Mammary epithelial cell (primary cell): ENCODE measurements at regions of chr16 and their contacts with region 1.

Region 1: GRCh38 chr16:31700526-31701388 is 172.8 kb upstream of the ZNF267 start:
- DNase-seq: peak; percentile 86
- H3K4me3 ChIP-seq: peak overlapping the region; percentile 83 to 95 (median 93)
- H3K27ac ChIP-seq: peak overlapping the region; percentile 88
- H3K4me1 ChIP-seq: peaks cover 8% of the 10 kb centered on the region
- H3K27me3 ChIP-seq: no peaks in the 10 kb centered on the region
- CTCF ChIP-seq: no peak

Region 2: GRCh38 chr16:31202414-31203375 is 498.1 kb before region 1 on chr16 and contains the start of gene PYCARD:
- CTCF ChIA-PET with region 1: no interaction called
- dilution Hi-C with region 1: loop called (anchors 10 kb)
- in situ Hi-C with region 1: loop called in 1 of 2 experiments (anchors 25 kb)
- intact Hi-C with region 1: no loop called
- DNase-seq: peak; percentile 49
- H3K4me3 ChIP-seq: peak within 1 kb of the TSS; percentile 49 to 90 (median 56)
- H3K27ac ChIP-seq: peak within 1 kb of the TSS; percentile 45
- H3K4me1 ChIP-seq: peaks cover 16% of the 10 kb centered on the region
- H3K27me3 ChIP-seq: no peaks in the 10 kb centered on the region
- CTCF ChIP-seq: no peak
- total RNA-seq, gene PYCARD: 30.3 to 38.8 TPM

Region 3: GRCh38 chr16:31440516-31441184 is 260.1 kb before region 1 on chr16:
- CTCF ChIA-PET with region 1: no interaction called
- dilution Hi-C with region 1: no loop called
- in situ Hi-C with region 1: no loop called
- intact Hi-C with region 1: loop called (anchors 2 kb)
- DNase-seq: no peak
- H3K4me3 ChIP-seq: no peak overlapping the region
- H3K27ac ChIP-seq: no peak overlapping the region
- H3K4me1 ChIP-seq: peaks cover 4% of the 10 kb centered on the region
- H3K27me3 ChIP-seq: no peaks in the 10 kb centered on the region
- CTCF ChIP-seq: no peak

Region 4: GRCh38 chr16:31472709-31473203 is 228.0 kb before region 1 on chr16:
- CTCF ChIA-PET with region 1: no interaction called
- dilution Hi-C with region 1: no loop called
- in situ Hi-C with region 1: loop called in 1 of 2 experiments (anchors 10 kb)
- intact Hi-C with region 1: loop called (anchors 1 kb)
- DNase-seq: peak; percentile 90
- H3K4me3 ChIP-seq: peak overlapping the region; percentile 60 to 72 (median 69)
- H3K27ac ChIP-seq: peak overlapping the region; percentile 40
- H3K4me1 ChIP-seq: peaks cover 8% of the 10 kb centered on the region
- H3K27me3 ChIP-seq: no peaks in the 10 kb centered on the region
- CTCF ChIP-seq: peak; percentile 84

Region 5: GRCh38 chr16:31664713-31665482 is 35.9 kb before region 1 on chr16:
- CTCF ChIA-PET with region 1: no interaction called
- dilution Hi-C with region 1: no loop called
- in situ Hi-C with region 1: no loop called
- intact Hi-C with region 1: loop called (anchors 5 kb)
- DNase-seq: peak; percentile 90
- H3K4me3 ChIP-seq: peak overlapping the region in 1 of 3 experiments; percentile 13
- H3K27ac ChIP-seq: peak overlapping the region; percentile 74
- H3K4me1 ChIP-seq: peaks cover 19% of the 10 kb centered on the region
- H3K27me3 ChIP-seq: no peaks in the 10 kb centered on the region
- CTCF ChIP-seq: no peak

Region 6: GRCh38 chr16:31718998-31719397 is 18.2 kb after region 1 on chr16:
- CTCF ChIA-PET with region 1: no interaction called
- dilution Hi-C with region 1: no loop called
- in situ Hi-C with region 1: no loop called
- intact Hi-C with region 1: no loop called
- DNase-seq: no peak
- H3K4me3 ChIP-seq: no peak overlapping the region
- H3K27ac ChIP-seq: no peak overlapping the region
- H3K4me1 ChIP-seq: peaks cover 15% of the 10 kb centered on the region
- H3K27me3 ChIP-seq: no peaks in the 10 kb centered on the region
- CTCF ChIP-seq: no peak

Region 7: GRCh38 chr16:31754998-31755615 is 54.4 kb after region 1 on chr16:
- CTCF ChIA-PET with region 1: no interaction called
- dilution Hi-C with region 1: no loop called
- in situ Hi-C with region 1: no loop called
- intact Hi-C with region 1: no loop called
- DNase-seq: no peak
- H3K4me3 ChIP-seq: no peak overlapping the region
- H3K27ac ChIP-seq: no peak overlapping the region
- H3K4me1 ChIP-seq: no peaks in the 10 kb centered on the region
- H3K27me3 ChIP-seq: no peaks in the 10 kb centered on the region
- CTCF ChIP-seq: no peak

Region 8: GRCh38 chr16:31868691-31869167 is 168.0 kb after region 1 on chr16:
- CTCF ChIA-PET with region 1: no interaction called
- dilution Hi-C with region 1: no loop called
- in situ Hi-C with region 1: no loop called
- intact Hi-C with region 1: loop called (anchors 1 kb)
- DNase-seq: peak; percentile 51
- H3K4me3 ChIP-seq: no peak overlapping the region
- H3K27ac ChIP-seq: no peak overlapping the region
- H3K4me1 ChIP-seq: peaks cover 11% of the 10 kb centered on the region
- H3K27me3 ChIP-seq: no peaks in the 10 kb centered on the region
- CTCF ChIP-seq: peak; percentile 65 to 72